HepG2 (cell line): ENCODE measurements at regions of chr14 and their contacts with region 1.

Region 1: DNA sequence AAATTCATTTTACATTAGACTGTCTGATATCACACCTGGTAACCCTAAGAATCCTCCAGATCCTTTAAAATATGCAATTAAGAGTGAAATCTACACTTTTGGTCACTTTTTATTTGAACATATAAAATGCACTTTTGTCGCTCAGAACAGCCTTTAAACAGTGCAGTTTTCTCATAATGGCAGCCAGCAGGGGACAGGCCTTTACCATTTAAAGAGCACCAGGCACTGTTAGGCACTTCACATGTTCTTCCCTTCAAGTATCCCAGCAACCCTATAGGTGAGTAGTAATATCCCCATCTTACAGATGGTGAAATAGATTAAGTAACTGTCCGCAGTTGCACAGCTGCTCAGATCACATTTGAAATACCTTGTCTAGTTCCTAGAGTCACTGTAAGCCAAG is 11.3 kb upstream of the SAMD4A start:
- DNase-seq: no peak
- ATAC-seq: peak; percentile 60
- H3K4me3 ChIP-seq: no peak overlapping the region
- H3K27ac ChIP-seq: no peak overlapping the region
- H3K4me1 ChIP-seq: peaks cover 23% of the 10 kb centered on the region
- H3K27me3 ChIP-seq: no peaks in the 10 kb centered on the region
- CTCF ChIP-seq: peak; percentile 21; the same call in 1 of the 2 replicates
- EP300 ChIP-seq: no peak
- POLR2A ChIP-seq: no peak
- RAD21 ChIP-seq: no peak

Region 2: GRCh38 chr14:53967606-53968005 is 588.0 kb before region 1 on chr14:
- CTCF ChIA-PET with region 1: no interaction called
- POLR2A ChIA-PET with region 1: no interaction called
- in situ Hi-C with region 1: no loop called
- intact Hi-C with region 1: no loop called
- DNase-seq: no peak
- ATAC-seq: no peak
- H3K4me3 ChIP-seq: no peak overlapping the region
- H3K27ac ChIP-seq: no peak overlapping the region
- H3K4me1 ChIP-seq: peaks cover 28% of the 10 kb centered on the region
- H3K27me3 ChIP-seq: no peaks in the 10 kb centered on the region
- CTCF ChIP-seq: no peak
- EP300 ChIP-seq: no peak
- POLR2A ChIP-seq: no peak
- RAD21 ChIP-seq: no peak

Region 3: GRCh38 chr14:54537650-54538049 is 18.0 kb before region 1 on chr14:
- CTCF ChIA-PET with region 1: no interaction called
- POLR2A ChIA-PET with region 1: interaction called, 5 read pairs
- in situ Hi-C with region 1: no loop called
- intact Hi-C with region 1: loop called (anchors 1 kb)
- DNase-seq: peak; percentile 79
- ATAC-seq: peak; percentile 67
- H3K4me3 ChIP-seq: peak overlapping the region in 1 of 3 experiments; percentile 2; a peak in 1 of 6 replicates
- H3K27ac ChIP-seq: peak overlapping the region; percentile 62
- H3K4me1 ChIP-seq: peaks cover 31% of the 10 kb centered on the region
- H3K27me3 ChIP-seq: no peaks in the 10 kb centered on the region
- CTCF ChIP-seq: no peak
- EP300 ChIP-seq: peak in 1 of 2 experiments; percentile 67; a peak in 2 of 4 replicates
- POLR2A ChIP-seq: no peak
- RAD21 ChIP-seq: no peak